Mammary epithelial cell (primary cell): ENCODE measurements at regions of chr19 and their contacts with region 1.

Region 1: GRCh38 chr19:40305403-40305802 is 20.3 kb upstream of the AKT2 start:
- DNase-seq: peak; percentile 63
- H3K4me3 ChIP-seq: no peak overlapping the region
- H3K27ac ChIP-seq: no peak overlapping the region
- H3K4me1 ChIP-seq: peaks cover 19% of the 10 kb centered on the region
- H3K27me3 ChIP-seq: no peaks in the 10 kb centered on the region
- CTCF ChIP-seq: peak; percentile 72 to 78

Region 2: DNA sequence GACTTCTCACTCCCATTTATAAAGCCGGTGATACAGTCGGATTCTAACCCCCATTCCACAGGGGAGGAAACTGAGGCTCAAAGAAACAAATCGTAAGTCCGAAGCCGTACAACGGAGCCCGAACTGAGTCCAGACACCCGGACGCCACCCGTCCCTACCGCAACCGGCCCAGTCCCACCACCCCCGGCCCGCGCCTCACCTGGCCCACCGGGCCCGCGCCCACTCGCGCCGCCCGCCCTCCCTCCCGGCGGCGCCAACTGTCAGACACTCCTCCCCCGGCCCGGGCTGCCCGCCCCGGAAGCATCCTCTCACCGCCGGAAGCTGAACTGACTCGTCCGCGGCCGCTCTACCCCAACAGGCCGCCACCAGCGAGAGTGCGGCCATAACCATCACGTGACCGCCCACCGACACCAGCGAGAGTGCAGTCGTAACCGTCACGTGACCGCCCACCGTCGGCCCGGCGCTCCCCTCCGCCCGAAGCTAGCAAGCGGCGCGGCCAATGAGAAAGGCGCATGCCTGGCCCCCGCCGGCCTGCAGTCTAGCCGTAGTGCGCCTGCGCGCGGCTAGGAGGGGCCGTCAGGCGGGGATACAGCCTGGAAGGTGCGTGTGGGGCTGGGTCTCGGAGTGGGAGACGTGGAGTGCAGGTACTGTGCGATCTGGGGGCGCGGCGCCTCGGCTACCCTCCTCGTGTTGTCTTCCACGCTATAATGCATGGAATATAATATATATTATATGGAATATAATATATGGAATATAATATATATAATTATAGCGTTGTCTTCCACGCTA is 42.9 kb after region 1 on chr19 and contains the starts of genes C19orf47 and PLD3:
- CTCF ChIA-PET with region 1: no interaction called
- dilution Hi-C with region 1: loop called (anchors 5 kb)
- in situ Hi-C with region 1: no loop called
- intact Hi-C with region 1: no loop called
- DNase-seq: peak; percentile 99
- H3K4me3 ChIP-seq: peak within 1 kb of the TSS; percentile 78 to 93 (median 86)
- H3K27ac ChIP-seq: peak within 1 kb of the TSS; percentile 74
- H3K4me1 ChIP-seq: peaks cover 9% of the 10 kb centered on the region
- H3K27me3 ChIP-seq: no peaks in the 10 kb centered on the region
- CTCF ChIP-seq: no peak
- total RNA-seq, gene C19orf47: 19.9 to 20.3 TPM
- total RNA-seq, gene PLD3: 146 to 293 TPM

Region 3: GRCh38 chr19:40425450-40426287 is 120.3 kb after region 1 on chr19 and contains the start of gene SERTAD1:
- CTCF ChIA-PET with region 1: no interaction called
- dilution Hi-C with region 1: no loop called
- in situ Hi-C with region 1: no loop called
- intact Hi-C with region 1: loop called (anchors 2 kb)
- DNase-seq: peak; percentile 99
- H3K4me3 ChIP-seq: peak within 1 kb of the TSS; percentile 77 to 92 (median 83)
- H3K27ac ChIP-seq: peak within 1 kb of the TSS; percentile 89
- H3K4me1 ChIP-seq: peaks cover 34% of the 10 kb centered on the region
- H3K27me3 ChIP-seq: no peaks in the 10 kb centered on the region
- CTCF ChIP-seq: peak; percentile 21 to 73
- total RNA-seq, gene SERTAD1: 20.6 to 25.8 TPM

Region 4: GRCh38 chr19:40529093-40529954 is 223.9 kb after region 1 on chr19:
- CTCF ChIA-PET with region 1: no interaction called
- dilution Hi-C with region 1: no loop called
- in situ Hi-C with region 1: no loop called
- intact Hi-C with region 1: loop called (anchors 2 kb)
- DNase-seq: peak; percentile 64
- H3K4me3 ChIP-seq: peak overlapping the region; percentile 28 to 29 (median 29)
- H3K27ac ChIP-seq: no peak overlapping the region
- H3K4me1 ChIP-seq: peaks cover 3% of the 10 kb centered on the region
- H3K27me3 ChIP-seq: no peaks in the 10 kb centered on the region
- CTCF ChIP-seq: peak; percentile 72 to 96

Region 5: GRCh38 chr19:40598121-40598917 is 292.9 kb after region 1 on chr19:
- CTCF ChIA-PET with region 1: interaction called, 15 read pairs
- dilution Hi-C with region 1: no loop called
- in situ Hi-C with region 1: loop called in 1 of 2 experiments (anchors 25 kb)
- intact Hi-C with region 1: loop called (anchors 1 kb)
- DNase-seq: peak; percentile 70
- H3K4me3 ChIP-seq: no peak overlapping the region
- H3K27ac ChIP-seq: no peak overlapping the region
- H3K4me1 ChIP-seq: peaks cover 38% of the 10 kb centered on the region
- H3K27me3 ChIP-seq: no peaks in the 10 kb centered on the region
- CTCF ChIP-seq: peak; percentile 98 to 99

Region 6: GRCh38 chr19:40614622-40615411 is 309.4 kb after region 1 on chr19:
- CTCF ChIA-PET with region 1: no interaction called
- dilution Hi-C with region 1: loop called (anchors 5 kb)
- in situ Hi-C with region 1: loop called in 1 of 2 experiments (anchors 25 kb)
- intact Hi-C with region 1: no loop called
- DNase-seq: peak; percentile 95
- H3K4me3 ChIP-seq: peak overlapping the region; percentile 18 to 53 (median 51)
- H3K27ac ChIP-seq: peak overlapping the region; percentile 48
- H3K4me1 ChIP-seq: peaks cover 50% of the 10 kb centered on the region
- H3K27me3 ChIP-seq: no peaks in the 10 kb centered on the region
- CTCF ChIP-seq: no peak

Region 7: GRCh38 chr19:40721936-40722661 is 416.7 kb after region 1 on chr19:
- CTCF ChIA-PET with region 1: interaction called, 15 read pairs
- dilution Hi-C with region 1: no loop called
- in situ Hi-C with region 1: no loop called
- intact Hi-C with region 1: no loop called
- DNase-seq: peak; percentile 89
- H3K4me3 ChIP-seq: peak overlapping the region; percentile 1 to 37 (median 27)
- H3K27ac ChIP-seq: peak overlapping the region; percentile 93
- H3K4me1 ChIP-seq: peaks cover 25% of the 10 kb centered on the region
- H3K27me3 ChIP-seq: no peaks in the 10 kb centered on the region
- CTCF ChIP-seq: no peak